ENCODE measurements at regions of chr6 and their contacts with region 1.

Region 1: DNA sequence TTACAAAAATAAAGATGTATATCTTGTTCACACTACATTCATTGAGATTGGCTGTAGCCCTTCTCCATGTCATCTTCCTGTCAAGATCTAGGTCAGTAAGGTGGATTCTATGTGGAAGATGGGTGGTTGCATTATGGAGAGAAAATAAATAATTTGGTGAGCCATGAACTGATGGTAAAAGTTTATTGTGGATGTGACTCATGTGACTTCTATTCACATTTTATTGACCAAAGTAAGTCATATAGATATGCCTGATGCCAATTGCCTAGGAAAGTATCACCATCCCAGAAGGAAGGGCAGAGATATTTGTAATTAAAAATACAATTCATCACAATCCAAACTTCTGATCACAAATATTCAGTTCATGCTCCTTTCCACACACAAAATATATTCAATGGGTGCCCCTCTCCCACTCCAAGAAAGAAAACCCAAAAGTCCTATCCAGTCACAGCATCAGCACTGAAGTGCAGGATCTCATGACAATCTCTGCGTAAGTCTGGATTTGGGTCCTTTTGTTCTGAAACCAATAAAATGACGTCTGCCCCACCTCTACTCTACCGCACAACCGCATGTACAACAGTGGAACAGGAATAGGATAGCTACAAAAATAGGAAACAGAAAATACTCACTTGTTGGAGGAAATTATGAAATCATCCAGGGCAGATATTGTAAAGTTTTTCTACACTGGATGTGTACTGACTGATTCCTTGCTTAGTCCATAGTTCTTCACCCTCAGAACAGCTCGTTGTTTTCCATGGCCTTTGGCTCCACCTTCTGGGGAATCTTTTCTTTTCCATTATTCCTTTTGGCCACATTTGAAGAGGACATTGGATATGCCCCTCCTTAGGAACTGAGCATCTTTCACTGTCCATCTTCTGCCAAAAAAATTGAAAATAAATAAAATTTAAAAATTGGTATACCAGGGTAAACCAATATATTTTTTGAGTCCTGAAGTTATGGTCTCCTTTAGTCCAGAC is 16.1 kb upstream of the SLC17A3 start:
- DNase-seq: peak; percentile 40
- H3K4me3 ChIP-seq: no peak overlapping the region
- H3K27ac ChIP-seq: no peak overlapping the region
- H3K4me1 ChIP-seq: no peaks in the 10 kb centered on the region
- H3K27me3 ChIP-seq: no peaks in the 10 kb centered on the region
- CTCF ChIP-seq: peak; percentile 22 to 61

Region 2: GRCh38 chr6:25223490-25223991 is 666.6 kb before region 1 on chr6:
- CTCF ChIA-PET with region 1: no interaction called
- dilution Hi-C with region 1: no loop called
- in situ Hi-C with region 1: no loop called
- intact Hi-C with region 1: loop called (anchors 1 kb)
- DNase-seq: peak; percentile 52
- H3K4me3 ChIP-seq: peak overlapping the region in 2 of 3 experiments; percentile 3
- H3K27ac ChIP-seq: no peak overlapping the region
- H3K4me1 ChIP-seq: peaks cover 20% of the 10 kb centered on the region
- H3K27me3 ChIP-seq: no peaks in the 10 kb centered on the region
- CTCF ChIP-seq: peak; percentile 84 to 92

Region 3: GRCh38 chr6:25263657-25264056 is 626.5 kb before region 1 on chr6:
- CTCF ChIA-PET with region 1: no interaction called
- dilution Hi-C with region 1: no loop called
- in situ Hi-C with region 1: no loop called
- intact Hi-C with region 1: loop called (anchors 5 kb)
- DNase-seq: peak; percentile 68
- H3K4me3 ChIP-seq: no peak overlapping the region
- H3K27ac ChIP-seq: no peak overlapping the region
- H3K4me1 ChIP-seq: no peaks in the 10 kb centered on the region
- H3K27me3 ChIP-seq: no peaks in the 10 kb centered on the region
- CTCF ChIP-seq: no peak

Region 4: GRCh38 chr6:25556516-25556915 is 333.6 kb before region 1 on chr6:
- CTCF ChIA-PET with region 1: no interaction called
- dilution Hi-C with region 1: no loop called
- in situ Hi-C with region 1: no loop called
- intact Hi-C with region 1: loop called (anchors 2 kb)
- DNase-seq: peak; percentile 35
- H3K4me3 ChIP-seq: no peak overlapping the region
- H3K27ac ChIP-seq: no peak overlapping the region
- H3K4me1 ChIP-seq: no peaks in the 10 kb centered on the region
- H3K27me3 ChIP-seq: no peaks in the 10 kb centered on the region
- CTCF ChIP-seq: peak; percentile 87

Region 5: GRCh38 chr6:25788305-25788922 is 101.8 kb before region 1 on chr6:
- CTCF ChIA-PET with region 1: no interaction called
- dilution Hi-C with region 1: no loop called
- in situ Hi-C with region 1: no loop called
- intact Hi-C with region 1: loop called (anchors 1 kb)
- DNase-seq: peak; percentile 39
- H3K4me3 ChIP-seq: no peak overlapping the region
- H3K27ac ChIP-seq: no peak overlapping the region
- H3K4me1 ChIP-seq: no peaks in the 10 kb centered on the region
- H3K27me3 ChIP-seq: no peaks in the 10 kb centered on the region
- CTCF ChIP-seq: peak; percentile 70 to 77

Region 6: DNA sequence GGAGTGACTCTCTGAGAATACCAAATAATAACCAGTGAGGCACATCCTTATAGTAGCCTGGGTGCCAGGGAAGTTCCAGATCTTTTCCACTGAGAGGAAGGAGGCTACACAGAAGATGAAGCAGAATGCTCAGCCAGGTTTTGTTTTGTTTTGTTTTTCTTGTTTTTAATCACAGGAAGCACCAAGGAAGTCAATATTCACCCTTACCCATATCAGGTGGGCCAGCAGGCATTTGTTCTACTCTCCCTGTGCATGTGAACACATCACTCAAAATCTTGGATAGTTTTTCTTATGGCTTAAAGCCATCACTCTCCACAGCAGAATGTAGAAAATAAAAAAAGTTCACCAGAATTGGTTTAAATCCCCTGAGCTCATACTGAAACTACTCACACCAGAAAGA is 68.8 kb before region 1 on chr6:
- CTCF ChIA-PET with region 1: no interaction called
- dilution Hi-C with region 1: no loop called
- in situ Hi-C with region 1: no loop called
- intact Hi-C with region 1: no loop called
- DNase-seq: no peak
- H3K4me3 ChIP-seq: no peak overlapping the region
- H3K27ac ChIP-seq: no peak overlapping the region
- H3K4me1 ChIP-seq: no peaks in the 10 kb centered on the region
- H3K27me3 ChIP-seq: no peaks in the 10 kb centered on the region
- CTCF ChIP-seq: no peak

Region 7: GRCh38 chr6:25942561-25943147 is 52.5 kb after region 1 on chr6:
- CTCF ChIA-PET with region 1: no interaction called
- dilution Hi-C with region 1: no loop called
- in situ Hi-C with region 1: no loop called
- intact Hi-C with region 1: loop called (anchors 5 kb)
- DNase-seq: peak; percentile 35
- H3K4me3 ChIP-seq: no peak overlapping the region
- H3K27ac ChIP-seq: no peak overlapping the region
- H3K4me1 ChIP-seq: no peaks in the 10 kb centered on the region
- H3K27me3 ChIP-seq: no peaks in the 10 kb centered on the region
- CTCF ChIP-seq: peak; percentile 47 to 55

Region 8: GRCh38 chr6:25992413-25993037 is 102.4 kb after region 1 on chr6:
- CTCF ChIA-PET with region 1: no interaction called
- dilution Hi-C with region 1: no loop called
- in situ Hi-C with region 1: no loop called
- intact Hi-C with region 1: loop called (anchors 5 kb)
- DNase-seq: peak; percentile 88
- H3K4me3 ChIP-seq: peak overlapping the region; percentile 42 to 62 (median 48)
- H3K27ac ChIP-seq: peak overlapping the region; percentile 68
- H3K4me1 ChIP-seq: peaks cover 7% of the 10 kb centered on the region
- H3K27me3 ChIP-seq: no peaks in the 10 kb centered on the region
- CTCF ChIP-seq: peak; percentile 92 to 95

Measured in mammary epithelial cell (primary cell).